OCI-LY7 (cell line): ENCODE measurements at regions of chr22 and their contacts with region 1.

Region 1: GRCh38 chr22:36379593-36380361 is 8.0 kb downstream of the MYH9 start:
- DNase-seq: no peak
- H3K4me3 ChIP-seq: peak overlapping the region; percentile 22
- H3K27ac ChIP-seq: peak overlapping the region; percentile 47
- H3K4me1 ChIP-seq: peaks cover 83% of the 10 kb centered on the region
- CTCF ChIP-seq: no peak

Region 2: DNA sequence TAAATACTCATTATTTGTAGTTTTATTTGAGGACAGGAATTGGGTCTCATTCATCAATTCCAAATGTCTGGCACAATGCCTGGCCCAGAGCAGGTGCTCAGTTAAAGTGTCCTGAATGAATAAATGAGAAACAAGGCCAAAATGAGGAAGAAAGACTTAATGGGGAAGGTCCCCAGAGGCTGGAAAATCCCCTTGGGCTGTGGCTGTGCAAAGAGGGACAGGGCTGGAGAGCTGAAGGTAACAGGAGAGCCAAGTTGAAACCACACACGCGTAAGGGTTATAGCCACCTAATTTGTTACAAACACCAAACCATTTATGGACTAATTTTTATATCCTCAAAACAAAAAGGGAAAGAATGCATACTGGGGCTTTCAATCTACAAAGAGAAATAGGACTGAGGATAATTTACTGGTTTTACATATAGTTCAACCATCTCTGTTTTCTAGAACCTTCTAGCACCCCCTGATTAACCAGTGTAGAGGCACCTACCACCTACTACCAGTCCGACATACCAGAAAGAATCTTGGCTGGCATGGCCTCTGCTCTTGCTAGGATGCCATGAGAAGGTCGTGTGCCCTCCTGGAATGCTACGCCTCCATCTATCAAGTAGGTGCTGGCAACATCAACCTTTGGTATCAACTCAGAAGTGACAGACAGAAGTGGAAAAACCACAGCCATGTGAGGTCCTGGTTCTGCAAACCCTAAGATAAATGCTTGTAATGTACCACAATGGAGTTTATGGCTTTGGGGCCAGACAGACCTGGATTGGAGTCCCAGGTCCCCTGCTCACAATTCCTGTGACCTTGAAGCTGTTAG is 20.4 kb before region 1 on chr22:
- CTCF ChIA-PET with region 1: no interaction called
- POLR2A ChIA-PET with region 1: interaction called, 10 read pairs
- intact Hi-C with region 1: no loop called
- DNase-seq: peak; percentile 47
- H3K4me3 ChIP-seq: no peak overlapping the region
- H3K27ac ChIP-seq: peak overlapping the region; percentile 40
- H3K4me1 ChIP-seq: peaks cover 78% of the 10 kb centered on the region
- CTCF ChIP-seq: no peak